ENCODE measurements at regions of chr18 and their contacts with region 1.

Region 1: GRCh38 chr18:42039396-42039795 is 84.4 kb downstream of the PIK3C3 start:
- DNase-seq: no peak
- H3K4me3 ChIP-seq: no peak overlapping the region
- H3K27ac ChIP-seq: no peak overlapping the region
- H3K4me1 ChIP-seq: no peaks in the 10 kb centered on the region
- H3K27me3 ChIP-seq: no peaks in the 10 kb centered on the region
- CTCF ChIP-seq: no peak
- EP300 ChIP-seq: no peak
- POLR2A ChIP-seq: no peak
- RAD21 ChIP-seq: no peak

Region 2: DNA sequence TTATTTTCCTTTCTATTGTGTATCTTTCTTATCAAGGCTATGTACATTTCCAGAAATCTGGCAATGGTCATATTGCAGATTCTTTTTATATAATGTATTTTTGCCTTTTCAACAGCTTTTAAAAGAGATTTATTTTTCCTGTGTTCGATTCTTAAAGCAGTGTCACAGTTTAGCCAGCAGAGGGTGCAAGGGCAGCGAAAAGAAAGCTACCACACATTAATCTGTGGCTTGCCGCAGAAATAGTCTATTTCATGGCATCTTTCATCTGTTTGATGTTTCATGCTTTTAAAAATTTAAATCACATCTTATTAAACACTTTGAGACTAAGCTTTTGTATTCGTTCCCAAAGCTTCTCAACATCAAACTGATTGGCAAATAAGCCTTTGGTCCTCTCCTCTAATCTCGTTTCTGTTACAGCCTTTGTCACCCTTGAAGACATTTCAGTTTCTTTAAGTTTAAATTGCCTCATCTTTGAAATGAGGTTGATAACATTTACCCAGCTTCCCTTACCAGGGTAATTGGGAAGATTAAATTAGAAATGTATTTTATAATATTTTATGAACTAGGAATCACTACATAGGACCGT is 11.1 kb before region 1 on chr18:
- CTCF ChIA-PET with region 1: interaction called, 10 read pairs
- POLR2A ChIA-PET with region 1: interaction called, 5 read pairs
- DNase-seq: no peak
- H3K4me3 ChIP-seq: no peak overlapping the region
- H3K27ac ChIP-seq: no peak overlapping the region
- H3K4me1 ChIP-seq: no peaks in the 10 kb centered on the region
- H3K27me3 ChIP-seq: no peaks in the 10 kb centered on the region
- CTCF ChIP-seq: peak in 2 of 3 experiments; percentile 40 to 65; a peak in 2 of 4 replicates
- EP300 ChIP-seq: no peak
- POLR2A ChIP-seq: no peak
- RAD21 ChIP-seq: peak; percentile 13 to 25; a peak in 3 of 4 replicates

Region 3: DNA sequence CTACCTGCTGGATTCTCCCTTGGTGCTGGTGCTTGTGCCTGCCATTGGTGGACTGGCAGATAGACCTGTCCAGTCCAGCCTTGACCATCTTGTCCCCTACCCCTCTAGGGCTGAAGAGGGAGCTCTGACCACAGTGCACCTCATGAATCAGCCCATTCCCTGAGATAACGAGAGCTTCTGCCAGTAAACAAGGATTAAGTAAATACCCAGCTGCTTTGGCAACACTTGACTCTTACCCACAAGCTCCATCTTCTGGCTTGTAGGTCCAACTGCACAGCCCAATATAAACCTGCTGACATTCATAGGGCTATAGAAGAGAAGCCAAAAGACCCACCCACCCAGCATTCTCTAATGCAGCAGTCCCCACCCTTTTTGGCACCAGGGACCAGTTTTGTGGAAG is 102.0 kb after region 1 on chr18:
- CTCF ChIA-PET with region 1: no interaction called
- POLR2A ChIA-PET with region 1: no interaction called
- DNase-seq: no peak
- H3K4me3 ChIP-seq: no peak overlapping the region
- H3K27ac ChIP-seq: no peak overlapping the region
- H3K4me1 ChIP-seq: no peaks in the 10 kb centered on the region
- H3K27me3 ChIP-seq: no peaks in the 10 kb centered on the region
- CTCF ChIP-seq: peak in 2 of 3 experiments; percentile 16 to 17; a peak in 2 of 4 replicates
- EP300 ChIP-seq: no peak
- POLR2A ChIP-seq: no peak
- RAD21 ChIP-seq: peak; percentile 30 to 39